ENCODE measurements at regions of chr1 and their contacts with region 1.

Region 1: DNA sequence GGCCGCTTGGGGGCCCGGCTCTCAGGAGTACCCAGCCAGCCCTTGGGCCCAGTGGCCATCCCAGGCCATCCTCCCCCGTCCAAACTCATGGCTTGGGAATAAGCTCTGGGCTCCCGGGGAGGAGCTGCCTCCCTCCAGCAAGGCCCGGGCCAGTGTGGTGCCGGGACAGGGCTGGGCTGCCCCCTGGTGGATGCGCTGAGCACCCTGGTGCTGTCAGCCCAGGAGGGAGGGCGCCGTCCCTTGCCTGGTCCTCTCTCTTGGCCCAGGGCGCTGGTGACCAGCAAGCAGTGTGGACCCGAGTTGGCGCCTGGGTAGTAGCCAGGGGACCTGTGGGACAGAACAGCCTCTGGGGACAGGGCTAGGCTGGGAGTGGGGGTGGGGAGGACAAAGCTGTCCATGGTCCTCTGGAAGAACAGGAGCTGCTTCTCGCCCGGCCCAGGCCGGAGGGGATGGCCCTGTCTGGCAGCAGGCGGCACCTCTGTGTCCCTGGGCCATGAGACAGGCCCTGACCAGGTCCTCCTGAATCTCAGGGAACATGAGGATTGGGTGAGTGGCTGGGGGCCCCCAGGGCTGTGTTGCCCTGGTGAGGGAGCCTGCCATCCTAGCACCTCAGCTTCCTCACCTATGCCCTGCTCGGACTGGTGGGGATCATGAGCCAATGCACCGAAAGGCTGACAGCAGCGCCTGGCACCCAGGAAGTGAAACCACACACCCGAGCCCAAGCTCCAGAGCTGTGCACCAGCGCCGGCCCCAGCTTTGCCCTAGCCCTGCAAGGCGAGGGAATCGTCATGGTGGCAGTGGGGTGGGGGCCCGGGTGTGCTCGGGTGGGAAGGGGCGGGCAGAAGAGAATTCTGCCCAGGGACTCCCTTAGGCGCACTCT is 9.4 kb downstream of the MORN1 start:
- DNase-seq: peak; percentile 81
- ATAC-seq: peak; percentile 84
- H3K4me3 ChIP-seq: no peak overlapping the region
- H3K4me3 Mint-ChIP-seq: no peak overlapping the region
- H3K27ac ChIP-seq: no peak overlapping the region
- H3K27ac Mint-ChIP-seq: peak overlapping the region; percentile 56
- H3K4me1 ChIP-seq: peaks cover 29 to 46% of the 10 kb centered on the region in 2 donors
- H3K4me1 Mint-ChIP-seq: peaks cover 23% of the 10 kb centered on the region
- H3K27me3 ChIP-seq: no peaks in the 10 kb centered on the region
- H3K27me3 Mint-ChIP-seq: no peaks in the 10 kb centered on the region
- CTCF ChIP-seq: peak; percentile 87

Region 2: GRCh38 chr1:2133039-2133878 is 248.7 kb before region 1 on chr1:
- CTCF ChIA-PET with region 1: no interaction called
- POLR2A ChIA-PET with region 1: no interaction called
- intact Hi-C with region 1: loop called (anchors 5 kb)
- DNase-seq: peak; percentile 98
- ATAC-seq: peak; percentile 91
- H3K4me3 ChIP-seq: peak overlapping the region; percentile 16 to 64 (median 56)
- H3K4me3 Mint-ChIP-seq: peak overlapping the region; percentile 88
- H3K27ac ChIP-seq: peak overlapping the region; percentile 80 to 82
- H3K27ac Mint-ChIP-seq: peak overlapping the region; percentile 91
- H3K4me1 ChIP-seq: peaks cover 10 to 19% of the 10 kb centered on the region in 2 donors
- H3K4me1 Mint-ChIP-seq: peaks cover 23% of the 10 kb centered on the region
- H3K27me3 ChIP-seq: no peaks in the 10 kb centered on the region
- H3K27me3 Mint-ChIP-seq: no peaks in the 10 kb centered on the region
- CTCF ChIP-seq: no peak

Region 3: DNA sequence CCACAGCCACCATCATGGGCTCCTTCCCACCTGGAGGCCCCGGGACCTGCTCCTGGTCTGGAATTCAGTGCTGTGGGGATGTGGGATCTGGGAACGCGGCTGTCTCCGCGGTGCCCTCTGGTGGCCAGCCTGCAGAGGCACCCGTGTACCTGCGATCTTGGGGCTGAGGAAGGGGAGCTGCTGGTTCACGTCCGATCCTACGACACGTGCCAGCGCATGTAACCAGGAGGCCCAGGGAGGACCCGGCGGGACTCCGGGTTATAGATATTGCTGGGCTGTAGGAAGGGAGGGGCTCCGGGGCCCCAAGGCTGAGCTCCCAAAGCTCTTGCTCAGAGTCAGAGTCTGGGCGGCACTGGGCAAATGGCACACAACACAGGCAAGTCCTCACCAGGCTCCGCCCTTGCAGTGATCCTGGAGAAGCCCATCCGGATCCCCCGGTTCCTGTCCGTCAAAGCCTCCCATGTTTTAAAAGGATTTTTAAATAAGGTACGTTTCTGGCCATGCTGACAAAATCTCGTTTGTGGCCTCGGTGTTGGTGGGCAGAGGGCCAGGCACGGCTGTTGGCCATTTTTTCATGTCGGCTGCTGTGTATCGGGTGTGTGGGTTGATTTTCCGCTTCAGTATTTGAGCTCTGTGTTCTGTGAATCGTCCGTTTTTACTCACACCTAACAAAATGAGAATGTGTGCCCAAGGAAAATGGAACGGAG is 207.5 kb before region 1 on chr1:
- CTCF ChIA-PET with region 1: interaction called, 12 read pairs
- POLR2A ChIA-PET with region 1: no interaction called
- intact Hi-C with region 1: no loop called
- DNase-seq: peak; percentile 56
- ATAC-seq: no peak
- H3K4me3 ChIP-seq: no peak overlapping the region
- H3K4me3 Mint-ChIP-seq: no peak overlapping the region
- H3K27ac ChIP-seq: no peak overlapping the region
- H3K27ac Mint-ChIP-seq: no peak overlapping the region
- H3K4me1 ChIP-seq: peaks cover 0 to 4% of the 10 kb centered on the region in 2 donors
- H3K4me1 Mint-ChIP-seq: peaks cover 1% of the 10 kb centered on the region
- H3K27me3 ChIP-seq: no peaks in the 10 kb centered on the region
- H3K27me3 Mint-ChIP-seq: no peaks in the 10 kb centered on the region
- CTCF ChIP-seq: peak; percentile 61

Region 4: DNA sequence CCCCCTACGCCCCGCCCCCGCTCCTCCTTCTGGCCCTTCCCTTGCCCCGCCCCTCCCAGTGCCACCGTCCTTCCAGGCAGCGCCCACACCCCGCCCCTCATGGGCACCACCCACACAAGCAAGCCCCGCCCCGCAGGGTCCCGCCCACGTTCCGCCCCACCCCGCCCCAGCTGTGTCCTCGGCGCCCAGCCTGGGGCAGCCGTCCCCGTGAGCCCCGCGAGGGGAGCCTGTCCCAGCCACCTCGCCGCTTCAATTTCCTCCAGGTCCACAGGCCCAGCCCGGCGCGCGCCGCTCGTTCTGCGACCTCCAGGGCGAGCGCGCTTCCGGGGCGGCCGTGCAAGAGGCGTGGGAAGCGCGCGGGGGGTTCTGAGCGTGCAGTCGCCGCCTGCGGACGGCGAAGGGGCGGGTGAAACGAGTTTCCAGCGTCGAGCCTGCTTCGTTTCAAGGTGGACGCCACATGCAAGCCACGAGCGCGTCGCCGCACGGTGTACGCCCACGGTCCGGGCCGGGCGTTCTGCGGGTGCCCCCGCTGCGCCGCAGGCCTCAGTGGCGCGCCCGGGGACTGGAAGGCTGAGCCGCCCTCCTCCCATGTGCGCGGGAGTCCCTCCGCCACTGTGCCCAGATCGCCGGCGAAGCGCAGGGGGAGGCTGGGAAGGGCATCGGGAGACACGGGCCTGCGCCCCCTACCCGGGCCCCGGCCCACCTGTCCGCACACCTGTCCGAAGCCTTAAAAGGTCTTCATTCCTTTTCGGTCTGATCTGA is 176.6 kb before region 1 on chr1:
- CTCF ChIA-PET with region 1: interaction called, 295 read pairs
- POLR2A ChIA-PET with region 1: no interaction called
- intact Hi-C with region 1: no loop called
- DNase-seq: peak; percentile 95
- ATAC-seq: peak; percentile 93
- H3K4me3 ChIP-seq: peak overlapping the region in 4 of 5 experiments; percentile 46 to 70 (median 64)
- H3K4me3 Mint-ChIP-seq: peak overlapping the region; percentile 77
- H3K27ac ChIP-seq: peak overlapping the region in 1 of 2 donors; percentile 47
- H3K27ac Mint-ChIP-seq: peak overlapping the region; percentile 72
- H3K4me1 ChIP-seq: peaks cover 32 to 44% of the 10 kb centered on the region in 2 donors
- H3K4me1 Mint-ChIP-seq: peaks cover 30% of the 10 kb centered on the region
- H3K27me3 ChIP-seq: no peaks in the 10 kb centered on the region
- H3K27me3 Mint-ChIP-seq: no peaks in the 10 kb centered on the region
- CTCF ChIP-seq: no peak

Region 5: DNA sequence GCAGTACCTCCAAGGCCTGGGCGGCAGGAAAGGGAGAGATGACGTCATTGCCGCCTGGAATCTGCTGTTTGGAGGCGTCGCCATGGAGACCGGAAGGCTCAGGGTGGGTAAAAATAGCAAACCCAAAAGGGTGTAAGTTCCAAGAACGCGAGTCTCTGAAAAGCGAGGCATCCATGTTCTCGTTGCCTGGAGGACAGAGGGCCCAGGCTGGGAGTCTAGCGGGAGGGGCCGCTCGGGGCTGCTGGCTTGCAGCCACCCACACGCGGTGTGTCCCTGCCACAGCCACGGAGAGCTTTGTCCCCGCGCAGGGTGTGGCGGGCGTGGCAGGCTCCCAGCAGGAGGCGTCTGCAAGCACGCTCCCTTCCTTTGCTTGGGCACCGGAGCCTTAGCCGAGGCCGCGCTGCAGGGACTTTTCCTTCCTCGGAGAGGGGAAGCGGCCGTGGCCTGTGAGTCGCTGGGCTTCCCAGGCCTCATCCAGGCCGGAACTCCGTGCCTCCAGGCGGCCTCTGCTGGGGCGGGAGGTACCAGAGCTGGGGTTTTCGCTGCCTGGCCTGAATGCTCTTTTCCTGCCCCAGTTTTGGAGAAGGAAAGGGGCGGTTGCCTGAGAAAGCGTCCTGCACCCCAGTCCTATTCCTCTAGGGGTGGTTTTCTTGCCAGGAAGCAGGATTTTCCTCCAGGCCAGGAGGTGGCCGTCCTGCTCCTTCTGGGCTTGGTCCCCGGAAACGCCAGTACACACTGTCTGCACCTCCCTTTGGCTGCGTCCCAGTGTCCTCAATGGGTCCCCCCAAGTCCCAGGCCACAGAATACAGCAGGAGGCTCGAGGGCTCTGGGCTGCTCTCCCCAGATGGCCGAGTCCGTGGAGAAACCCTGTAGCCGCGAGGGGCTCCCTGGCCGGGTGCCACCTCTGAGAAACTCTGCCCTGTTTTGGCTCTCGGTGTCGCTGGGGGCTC is 169.2 kb before region 1 on chr1:
- CTCF ChIA-PET with region 1: interaction called, 11 read pairs
- POLR2A ChIA-PET with region 1: no interaction called
- intact Hi-C with region 1: no loop called
- DNase-seq: peak; percentile 64
- ATAC-seq: peak; percentile 65
- H3K4me3 ChIP-seq: peak overlapping the region in 4 of 5 experiments; percentile 28 to 53 (median 40)
- H3K4me3 Mint-ChIP-seq: peak overlapping the region; percentile 37
- H3K27ac ChIP-seq: no peak overlapping the region
- H3K27ac Mint-ChIP-seq: no peak overlapping the region
- H3K4me1 ChIP-seq: peaks cover 10 to 16% of the 10 kb centered on the region in 2 donors
- H3K4me1 Mint-ChIP-seq: peaks cover 7% of the 10 kb centered on the region
- H3K27me3 ChIP-seq: peaks cover 0 to 10% (median 3%) of the 10 kb centered on the region in 4 experiments
- H3K27me3 Mint-ChIP-seq: no peaks in the 10 kb centered on the region
- CTCF ChIP-seq: no peak

Region 6: GRCh38 chr1:2227346-2228153 is 154.4 kb before region 1 on chr1:
- CTCF ChIA-PET with region 1: interaction called, 22 read pairs
- POLR2A ChIA-PET with region 1: interaction called, 4 read pairs
- intact Hi-C with region 1: loop called (anchors 1 kb)
- DNase-seq: peak; percentile 98
- ATAC-seq: peak; percentile 91
- H3K4me3 ChIP-seq: peak overlapping the region in 4 of 5 experiments; percentile 50 to 65 (median 60)
- H3K4me3 Mint-ChIP-seq: peak overlapping the region; percentile 80
- H3K27ac ChIP-seq: peak overlapping the region; percentile 57 to 83
- H3K27ac Mint-ChIP-seq: peak overlapping the region; percentile 83
- H3K4me1 ChIP-seq: peaks cover 35 to 43% of the 10 kb centered on the region in 2 donors
- H3K4me1 Mint-ChIP-seq: peaks cover 37% of the 10 kb centered on the region
- H3K27me3 ChIP-seq: no peaks in the 10 kb centered on the region
- H3K27me3 Mint-ChIP-seq: no peaks in the 10 kb centered on the region
- CTCF ChIP-seq: no peak

Region 7: DNA sequence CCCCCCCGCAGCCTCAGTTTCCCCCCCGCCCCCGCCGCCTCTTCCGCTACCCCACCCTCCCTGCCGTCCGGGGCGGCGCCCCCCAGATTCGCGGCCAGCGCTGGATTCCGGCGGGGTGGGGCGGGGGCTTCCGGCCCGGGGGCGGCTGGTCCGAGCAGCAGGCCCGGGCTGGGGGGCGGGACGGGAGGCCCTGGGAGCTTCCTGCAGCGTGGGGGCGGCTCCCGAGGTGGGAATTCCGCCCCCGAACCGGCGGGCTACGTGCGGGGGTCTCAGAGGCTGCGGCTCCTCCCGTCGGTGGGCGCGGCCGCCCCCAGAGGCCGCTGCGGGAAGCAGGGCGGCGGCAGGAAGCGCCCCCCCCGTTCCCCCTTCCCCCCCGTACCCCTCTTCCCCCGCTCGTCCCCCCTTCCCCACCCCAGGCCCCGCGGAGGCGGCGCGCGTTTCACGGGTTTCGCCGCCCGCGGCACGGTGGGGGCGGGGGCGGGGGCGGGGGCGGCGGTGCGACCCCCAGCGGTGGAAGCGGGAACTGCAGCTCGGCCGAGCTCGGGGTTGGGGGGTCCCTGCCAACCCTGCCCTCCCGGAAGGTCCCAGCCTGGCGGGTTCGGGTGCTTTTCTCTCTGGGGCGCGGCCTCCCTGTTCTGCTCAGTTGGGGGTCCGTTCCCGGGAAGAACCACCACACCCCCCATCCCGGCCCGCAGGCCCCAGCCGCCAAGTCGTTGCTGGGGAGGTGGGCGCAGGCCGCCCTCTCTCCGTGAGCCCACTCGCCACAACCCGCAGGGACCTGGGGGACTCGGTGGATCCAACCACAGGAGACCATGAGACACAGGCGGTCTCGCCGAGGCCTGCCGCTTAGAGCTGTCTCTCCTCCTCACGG is 66.9 kb before region 1 on chr1:
- CTCF ChIA-PET with region 1: interaction called, 19 read pairs
- POLR2A ChIA-PET with region 1: interaction called, 3 read pairs
- intact Hi-C with region 1: no loop called
- DNase-seq: peak; percentile 81
- ATAC-seq: peak; percentile 59
- H3K4me3 ChIP-seq: peak overlapping the region in 4 of 5 experiments; percentile 51 to 71 (median 59)
- H3K4me3 Mint-ChIP-seq: peak overlapping the region; percentile 69
- H3K27ac ChIP-seq: peak overlapping the region; percentile 84 to 91
- H3K27ac Mint-ChIP-seq: peak overlapping the region; percentile 77
- H3K4me1 ChIP-seq: peaks cover 44 to 53% of the 10 kb centered on the region in 2 donors
- H3K4me1 Mint-ChIP-seq: peaks cover 35% of the 10 kb centered on the region
- H3K27me3 ChIP-seq: no peaks in the 10 kb centered on the region
- H3K27me3 Mint-ChIP-seq: no peaks in the 10 kb centered on the region
- CTCF ChIP-seq: peak; percentile 95